ENCODE measurements at regions of chr1 and their contacts with region 1.

Region 1: GRCh38 chr1:211267204-211267857 is 8.2 kb downstream of the RCOR3 start:
- DNase-seq: no peak
- H3K4me3 ChIP-seq: no peak overlapping the region
- H3K27ac ChIP-seq: no peak overlapping the region
- H3K4me1 ChIP-seq: no peaks in the 10 kb centered on the region
- H3K27me3 ChIP-seq: no peaks in the 10 kb centered on the region
- CTCF ChIP-seq: no peak
- POLR2A ChIP-seq: no peak

Region 2: GRCh38 chr1:210288106-210288505 is 979.2 kb before region 1 on chr1:
- intact Hi-C with region 1: loop called (anchors 5 kb)
- DNase-seq: no peak
- H3K4me3 ChIP-seq: no peak overlapping the region
- H3K27ac ChIP-seq: no peak overlapping the region
- H3K4me1 ChIP-seq: peaks cover 0 to 3% of the 10 kb centered on the region in 2 donors
- H3K27me3 ChIP-seq: no peaks in the 10 kb centered on the region
- CTCF ChIP-seq: no peak
- POLR2A ChIP-seq: no peak

Region 3: GRCh38 chr1:210505601-210506496 is 761.5 kb before region 1 on chr1:
- intact Hi-C with region 1: loop called (anchors 5 kb)
- DNase-seq: no peak
- H3K4me3 ChIP-seq: no peak overlapping the region
- H3K27ac ChIP-seq: no peak overlapping the region
- H3K4me1 ChIP-seq: no peaks in the 10 kb centered on the region
- H3K27me3 ChIP-seq: no peaks in the 10 kb centered on the region
- CTCF ChIP-seq: no peak
- POLR2A ChIP-seq: no peak

Region 4: DNA sequence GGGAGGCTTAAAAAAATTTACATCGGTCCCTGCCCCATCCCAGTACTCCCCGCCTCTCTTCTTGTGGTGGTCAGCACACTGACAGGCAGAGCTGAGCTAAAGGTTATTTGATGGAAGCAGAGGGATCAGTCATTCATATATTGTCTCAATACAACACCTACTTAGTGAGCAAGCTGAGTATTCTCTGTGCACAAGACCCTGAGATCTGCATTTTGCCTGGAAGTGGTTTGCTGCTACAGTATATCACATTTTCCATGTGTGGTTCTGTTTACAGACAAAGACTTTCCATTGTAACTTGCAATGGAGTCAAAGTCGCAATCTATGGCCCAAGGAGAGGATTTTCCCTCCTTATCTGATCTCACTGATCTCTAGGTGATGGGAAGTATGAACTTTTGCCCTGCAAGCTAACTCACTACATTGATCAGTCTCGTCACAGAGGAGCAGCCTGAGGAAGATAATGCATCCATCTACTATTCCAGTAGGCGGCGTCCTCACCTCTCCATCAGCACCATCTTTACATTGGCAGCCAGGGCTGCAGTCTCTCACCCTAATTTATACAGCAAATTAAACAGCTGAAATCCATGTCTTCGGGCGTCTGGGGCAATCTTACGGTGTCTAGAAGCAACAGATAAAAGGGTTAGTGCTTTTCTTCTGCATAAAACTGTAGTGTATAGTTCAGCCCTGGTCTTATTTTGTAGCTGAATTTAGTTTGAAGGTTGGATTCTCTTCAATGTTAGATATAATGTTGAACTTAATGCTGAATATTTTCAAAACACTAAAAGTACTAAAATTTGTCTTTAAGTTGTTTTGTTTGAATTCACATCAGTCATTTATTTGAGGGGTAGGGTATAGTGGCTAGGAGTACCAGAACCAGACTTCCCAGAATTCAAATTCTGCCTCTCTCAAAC is 56.1 kb after region 1 on chr1:
- intact Hi-C with region 1: no loop called
- DNase-seq: no peak
- H3K4me3 ChIP-seq: no peak overlapping the region
- H3K27ac ChIP-seq: no peak overlapping the region
- H3K4me1 ChIP-seq: no peaks in the 10 kb centered on the region
- H3K27me3 ChIP-seq: no peaks in the 10 kb centered on the region
- CTCF ChIP-seq: peak in 2 of 3 donors; percentile 73 to 77
- POLR2A ChIP-seq: no peak

Region 5: GRCh38 chr1:213110349-213111300 is 1843.3 kb after region 1 on chr1:
- intact Hi-C with region 1: no loop called
- DNase-seq: no peak
- H3K4me3 ChIP-seq: no peak overlapping the region
- H3K27ac ChIP-seq: no peak overlapping the region
- H3K4me1 ChIP-seq: no peaks in the 10 kb centered on the region
- H3K27me3 ChIP-seq: no peaks in the 10 kb centered on the region
- CTCF ChIP-seq: no peak
- POLR2A ChIP-seq: no peak